ENCODE measurements at regions of chr14 and their contacts with region 1.

Region 1: DNA sequence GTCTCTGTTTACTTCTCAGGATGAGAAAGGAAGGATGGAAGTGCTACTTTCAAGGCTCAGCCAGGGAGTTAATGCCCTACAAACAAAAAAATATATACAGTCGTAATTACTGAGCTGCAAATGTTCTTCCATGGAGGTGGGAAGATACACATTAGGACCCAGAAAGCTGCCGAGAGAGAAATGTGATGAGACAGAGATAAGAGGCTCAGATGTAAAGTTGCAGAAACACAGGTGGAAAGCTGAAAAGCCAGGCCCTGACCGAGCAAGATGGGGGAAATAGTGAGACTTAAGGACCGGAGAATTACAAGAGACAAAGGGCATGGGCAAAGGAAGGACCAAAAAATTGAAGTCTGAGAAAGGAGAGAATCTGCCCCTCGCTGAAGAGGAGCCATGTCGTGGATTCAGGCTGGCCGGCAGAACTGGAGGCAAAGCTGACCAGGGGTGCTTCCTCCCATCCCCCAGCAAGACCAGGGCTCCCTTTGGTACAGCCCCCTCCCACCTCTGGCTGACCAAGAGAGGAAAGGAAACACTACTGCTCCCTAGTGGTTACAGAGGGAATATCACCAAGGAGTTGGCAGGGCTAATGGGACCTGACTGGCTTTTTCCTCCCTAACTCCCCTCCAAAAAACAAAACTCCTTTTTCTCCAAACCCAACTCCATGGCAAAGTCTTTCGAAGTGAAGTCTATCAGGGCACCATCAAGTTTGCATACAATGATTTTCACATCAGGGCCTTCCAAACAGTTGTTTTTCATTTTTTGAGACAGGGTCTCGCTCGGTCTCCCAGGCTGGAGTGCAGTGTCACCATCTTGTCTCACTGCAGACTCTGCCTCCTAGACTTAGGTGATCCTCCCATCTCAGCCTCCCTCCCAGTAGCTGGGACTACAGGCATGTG is 12.1 kb downstream of the ZFHX2 start:
- DNase-seq: peak; percentile 26
- H3K4me3 Mint-ChIP-seq: no peak overlapping the region
- H3K27ac Mint-ChIP-seq: no peak overlapping the region
- H3K4me1 Mint-ChIP-seq: no peaks in the 10 kb centered on the region
- H3K27me3 Mint-ChIP-seq: no peaks in the 10 kb centered on the region

Region 2: DNA sequence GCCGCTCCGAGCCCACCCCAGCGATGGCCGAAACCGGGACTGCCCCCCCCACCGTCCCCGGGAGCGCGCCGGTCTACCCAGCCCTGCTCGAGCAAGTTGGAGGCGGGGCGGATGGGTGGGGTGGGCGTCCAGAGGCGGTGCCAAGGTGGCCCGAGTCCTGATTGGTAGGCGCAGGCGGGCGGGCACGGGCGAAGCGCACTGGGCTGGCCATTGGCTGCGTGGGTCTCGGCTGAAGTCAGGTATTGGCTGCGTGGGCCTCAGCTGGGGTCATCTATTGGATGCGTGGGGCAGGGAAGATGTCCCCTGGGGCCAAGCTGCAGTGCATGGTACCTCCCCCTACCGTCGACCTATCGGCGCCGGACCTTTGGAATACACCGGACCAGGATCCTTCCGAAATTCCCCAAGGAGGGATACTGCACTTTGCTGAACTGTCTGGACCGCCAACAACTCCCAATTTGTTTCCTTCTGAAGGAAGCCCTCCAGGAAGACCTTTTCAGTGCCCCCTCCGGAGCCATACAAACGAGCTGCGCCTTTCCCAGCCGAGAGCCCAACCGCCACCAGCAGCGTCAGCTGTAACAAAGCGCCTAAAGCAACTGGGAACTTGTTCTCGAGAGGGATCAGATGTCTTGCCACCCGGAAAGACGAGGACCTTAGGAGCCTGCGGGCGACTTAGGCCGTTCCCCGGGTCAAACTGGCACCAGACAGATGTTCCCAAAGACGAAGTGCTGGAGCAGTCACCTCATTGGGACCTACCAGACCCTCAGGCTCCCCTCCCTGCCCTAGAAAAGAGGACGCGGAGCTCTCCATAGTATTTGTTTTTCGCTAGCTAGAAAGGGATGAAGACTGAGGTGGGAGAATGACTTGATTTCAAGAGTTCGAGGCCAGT is 253.2 kb before region 1 on chr14 and contains the start of gene HOMEZ:
- CTCF ChIA-PET with region 1: no interaction called
- intact Hi-C with region 1: no loop called
- DNase-seq: peak; percentile 99
- H3K4me3 Mint-ChIP-seq: peak within 1 kb of the TSS; percentile 99
- H3K27ac Mint-ChIP-seq: peak within 1 kb of the TSS; percentile 96
- H3K4me1 Mint-ChIP-seq: peaks cover 29% of the 10 kb centered on the region
- H3K27me3 Mint-ChIP-seq: no peaks in the 10 kb centered on the region
- total RNA-seq, gene HOMEZ: 6.3 to 7.8 TPM

Region 3: GRCh38 chr14:23478111-23478759 is 61.3 kb before region 1 on chr14:
- CTCF ChIA-PET with region 1: interaction called, 85 read pairs
- intact Hi-C with region 1: loop called (anchors 1 kb)
- DNase-seq: peak; percentile 80
- H3K4me3 Mint-ChIP-seq: no peak overlapping the region
- H3K27ac Mint-ChIP-seq: no peak overlapping the region
- H3K4me1 Mint-ChIP-seq: peaks cover 7% of the 10 kb centered on the region
- H3K27me3 Mint-ChIP-seq: no peaks in the 10 kb centered on the region

Region 4: DNA sequence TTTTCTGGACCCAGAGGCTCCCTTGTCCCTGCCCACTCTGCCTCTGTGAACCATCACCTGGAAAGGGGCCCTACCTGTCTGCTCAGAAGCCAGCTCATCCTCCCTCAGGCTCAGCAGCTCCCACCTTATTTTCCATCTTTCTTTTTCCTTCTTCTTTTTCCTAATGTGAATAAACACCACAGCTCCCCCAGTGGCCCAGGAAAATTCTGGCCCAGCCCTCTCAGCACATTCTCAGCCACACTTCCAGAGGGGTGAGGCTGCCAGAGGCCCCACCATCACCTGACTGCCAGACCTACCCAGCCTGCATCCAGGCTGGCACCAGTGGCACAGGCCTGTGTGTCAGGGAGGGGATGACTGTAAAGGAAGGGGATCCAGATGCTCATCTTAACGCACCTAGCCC is 10.9 kb before region 1 on chr14:
- CTCF ChIA-PET with region 1: interaction called, 13 read pairs
- intact Hi-C with region 1: no loop called
- DNase-seq: no peak
- H3K4me3 Mint-ChIP-seq: no peak overlapping the region
- H3K27ac Mint-ChIP-seq: no peak overlapping the region
- H3K4me1 Mint-ChIP-seq: peaks cover 4% of the 10 kb centered on the region
- H3K27me3 Mint-ChIP-seq: no peaks in the 10 kb centered on the region

Measured in activated naive CD4-positive, alpha-beta T cell treated with anti-CD3 and anti-CD28 coated beads for 36 hours (primary cell).